ENCODE measurements at regions of chr2 and their contacts with region 1.

Region 1: GRCh38 chr2:234032279-234032856 is 18.1 kb upstream of the SPP2 start:
- DNase-seq: peak; percentile 86
- ATAC-seq: peak; percentile 94
- H3K4me3 ChIP-seq: no peak overlapping the region
- H3K27ac ChIP-seq: peak overlapping the region; percentile 43
- H3K4me1 ChIP-seq: peaks cover 28% of the 10 kb centered on the region
- H3K27me3 ChIP-seq: no peaks in the 10 kb centered on the region
- CTCF ChIP-seq: no peak

Region 2: DNA sequence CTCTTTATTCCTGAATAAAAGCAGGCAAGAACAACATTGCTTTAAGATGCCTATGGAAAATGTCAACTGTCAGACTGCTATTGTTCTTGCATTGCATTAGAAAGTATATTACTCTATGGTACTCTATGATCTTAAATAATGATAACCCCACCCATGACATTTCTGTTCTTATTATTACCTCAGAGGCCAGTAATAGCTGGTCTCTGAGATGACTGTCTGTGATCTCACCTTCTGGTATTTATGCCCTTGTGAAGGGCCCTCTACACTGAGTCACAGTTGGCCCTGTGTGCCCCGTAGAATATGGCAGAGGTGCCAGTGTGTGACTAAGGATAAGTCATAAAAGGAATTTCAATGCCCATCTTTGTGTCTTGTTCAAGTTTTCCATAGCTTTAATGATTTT is 79.2 kb after region 1 on chr2:
- CTCF ChIA-PET with region 1: no interaction called
- POLR2A ChIA-PET with region 1: no interaction called
- intact Hi-C with region 1: loop called (anchors 5 kb)
- DNase-seq: peak; percentile 96
- ATAC-seq: peak; percentile 100
- H3K4me3 ChIP-seq: no peak overlapping the region
- H3K27ac ChIP-seq: peak overlapping the region; percentile 69
- H3K4me1 ChIP-seq: peaks cover 26% of the 10 kb centered on the region
- H3K27me3 ChIP-seq: no peaks in the 10 kb centered on the region
- CTCF ChIP-seq: no peak

Measured in PC-3 (cell line).